CD4-positive, alpha-beta T cell (primary cell): ENCODE measurements at regions of chr5 and their contacts with region 1.

Region 1: DNA sequence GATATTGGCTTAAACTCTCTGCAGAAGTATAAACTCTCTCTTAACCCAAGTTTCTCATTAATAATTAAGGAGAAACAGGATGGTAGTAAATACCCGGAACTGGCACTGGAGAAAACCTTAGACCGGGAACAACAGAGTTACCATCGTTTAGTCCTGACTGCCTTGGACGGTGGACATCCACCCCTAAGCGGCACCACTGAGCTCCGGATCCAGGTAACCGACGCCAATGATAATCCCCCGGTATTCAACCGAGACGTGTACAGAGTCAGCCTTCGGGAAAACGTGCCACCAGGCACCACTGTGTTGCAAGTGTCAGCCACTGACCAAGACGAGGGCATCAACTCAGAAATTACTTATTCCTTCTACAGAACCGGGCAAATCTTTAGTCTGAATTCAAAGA is 861 bp downstream of the PCDHGB5 start:
- DNase-seq: no peak
- ATAC-seq: no peak
- H3K4me3 ChIP-seq: no peak overlapping the region
- H3K4me3 Mint-ChIP-seq: no peak overlapping the region
- H3K27ac ChIP-seq: no peak overlapping the region
- H3K27ac Mint-ChIP-seq: no peak overlapping the region
- H3K4me1 ChIP-seq: no peaks in the 10 kb centered on the region
- H3K4me1 Mint-ChIP-seq: peaks cover 3% of the 10 kb centered on the region
- H3K27me3 ChIP-seq: peaks cover 55 to 80% of the 10 kb centered on the region in 2 experiments
- H3K27me3 Mint-ChIP-seq: peaks cover 80% of the 10 kb centered on the region
- CTCF ChIP-seq: no peak

Region 2: DNA sequence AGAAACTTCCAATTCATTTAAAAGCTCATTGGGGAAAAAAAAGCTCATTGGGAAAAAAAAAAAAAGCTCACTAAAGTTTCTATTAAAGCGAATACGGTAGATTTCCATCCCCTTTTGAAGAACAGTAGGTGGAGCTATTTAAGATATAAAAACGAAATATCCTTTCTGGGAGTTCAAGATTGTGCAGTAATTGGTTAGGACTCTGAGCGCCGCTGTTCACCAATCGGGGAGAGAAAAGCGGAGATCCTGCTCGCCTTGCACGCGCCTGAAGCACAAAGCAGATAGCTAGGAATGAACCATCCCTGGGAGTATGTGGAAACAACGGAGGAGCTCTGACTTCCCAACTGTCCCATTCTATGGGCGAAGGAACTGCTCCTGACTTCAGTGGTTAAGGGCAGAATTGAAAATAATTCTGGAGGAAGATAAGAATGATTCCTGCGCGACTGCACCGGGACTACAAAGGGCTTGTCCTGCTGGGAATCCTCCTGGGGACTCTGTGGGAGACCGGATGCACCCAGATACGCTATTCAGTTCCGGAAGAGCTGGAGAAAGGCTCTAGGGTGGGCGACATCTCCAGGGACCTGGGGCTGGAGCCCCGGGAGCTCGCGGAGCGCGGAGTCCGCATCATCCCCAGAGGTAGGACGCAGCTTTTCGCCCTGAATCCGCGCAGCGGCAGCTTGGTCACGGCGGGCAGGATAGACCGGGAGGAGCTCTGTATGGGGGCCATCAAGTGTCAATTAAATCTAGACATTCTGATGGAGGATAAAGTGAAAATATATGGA is 31.9 kb after region 1 on chr5 and contains the start of gene PCDHGA12:
- CTCF ChIA-PET with region 1: no interaction called
- POLR2A ChIA-PET with region 1: no interaction called
- intact Hi-C with region 1: no loop called
- DNase-seq: peak in 3 of 14 experiments; percentile 31 to 42 (median 39)
- ATAC-seq: no peak
- H3K4me3 ChIP-seq: peak within 1 kb of the TSS; percentile 10
- H3K4me3 Mint-ChIP-seq: peak within 1 kb of the TSS; percentile 69
- H3K27ac ChIP-seq: no peak within 1 kb of the TSS
- H3K27ac Mint-ChIP-seq: no peak within 1 kb of the TSS
- H3K4me1 ChIP-seq: peaks cover 6% of the 10 kb centered on the region
- H3K4me1 Mint-ChIP-seq: peaks cover 8% of the 10 kb centered on the region
- H3K27me3 ChIP-seq: peaks cover 65 to 71% of the 10 kb centered on the region in 2 experiments
- H3K27me3 Mint-ChIP-seq: peaks cover 81% of the 10 kb centered on the region
- CTCF ChIP-seq: no peak
- total RNA-seq, gene PCDHGA12: not detected

Region 3: GRCh38 chr5:141512390-141512910 is 113.8 kb after region 1 on chr5:
- CTCF ChIA-PET with region 1: interaction called, 10 read pairs
- POLR2A ChIA-PET with region 1: no interaction called
- intact Hi-C with region 1: no loop called
- DNase-seq: peak; percentile 70 to 91 (median 82)
- ATAC-seq: peak; percentile 51
- H3K4me3 ChIP-seq: peak overlapping the region; percentile 52
- H3K4me3 Mint-ChIP-seq: peak overlapping the region; percentile 95
- H3K27ac ChIP-seq: no peak overlapping the region
- H3K27ac Mint-ChIP-seq: peak overlapping the region; percentile 72
- H3K4me1 ChIP-seq: peaks cover 26% of the 10 kb centered on the region
- H3K4me1 Mint-ChIP-seq: peaks cover 25% of the 10 kb centered on the region
- H3K27me3 ChIP-seq: no peaks in the 10 kb centered on the region
- H3K27me3 Mint-ChIP-seq: peaks cover 4% of the 10 kb centered on the region
- CTCF ChIP-seq: peak; percentile 95

Region 4: GRCh38 chr5:141650851-141651727 is 252.5 kb after region 1 on chr5 and contains the start of gene FCHSD1:
- CTCF ChIA-PET with region 1: no interaction called
- POLR2A ChIA-PET with region 1: no interaction called
- intact Hi-C with region 1: no loop called
- DNase-seq: peak; percentile 62 to 88 (median 76)
- ATAC-seq: peak; percentile 91
- H3K4me3 ChIP-seq: peak within 1 kb of the TSS; percentile 86
- H3K4me3 Mint-ChIP-seq: peak within 1 kb of the TSS; percentile 86
- H3K27ac ChIP-seq: peak within 1 kb of the TSS; percentile 26 to 83
- H3K27ac Mint-ChIP-seq: peak within 1 kb of the TSS; percentile 54
- H3K4me1 ChIP-seq: peaks cover 28% of the 10 kb centered on the region
- H3K4me1 Mint-ChIP-seq: peaks cover 38% of the 10 kb centered on the region
- H3K27me3 ChIP-seq: no peaks in the 10 kb centered on the region
- H3K27me3 Mint-ChIP-seq: peaks cover 3% of the 10 kb centered on the region
- CTCF ChIP-seq: no peak
- total RNA-seq, gene FCHSD1: 79.8 to 86.8 TPM